CD4-positive, alpha-beta T cell (primary cell): ENCODE measurements at regions of chr3 and their contacts with region 1.

Region 1: GRCh38 chr3:131485119-131485518 is 17.7 kb downstream of the MRPL3 start:
- DNase-seq: no peak
- ATAC-seq: no peak
- H3K4me3 ChIP-seq: no peak overlapping the region
- H3K4me3 Mint-ChIP-seq: no peak overlapping the region
- H3K27ac ChIP-seq: no peak overlapping the region
- H3K27ac Mint-ChIP-seq: no peak overlapping the region
- H3K4me1 ChIP-seq: no peaks in the 10 kb centered on the region
- H3K4me1 Mint-ChIP-seq: peaks cover 39% of the 10 kb centered on the region
- H3K27me3 ChIP-seq: no peaks in the 10 kb centered on the region
- H3K27me3 Mint-ChIP-seq: no peaks in the 10 kb centered on the region
- CTCF ChIP-seq: no peak

Region 2: GRCh38 chr3:130490241-130490640 is 994.9 kb before region 1 on chr3:
- CTCF ChIA-PET with region 1: no interaction called
- POLR2A ChIA-PET with region 1: no interaction called
- intact Hi-C with region 1: no loop called
- DNase-seq: no peak
- ATAC-seq: no peak
- H3K4me3 ChIP-seq: no peak overlapping the region
- H3K4me3 Mint-ChIP-seq: no peak overlapping the region
- H3K27ac ChIP-seq: no peak overlapping the region
- H3K27ac Mint-ChIP-seq: no peak overlapping the region
- H3K4me1 ChIP-seq: no peaks in the 10 kb centered on the region
- H3K4me1 Mint-ChIP-seq: no peaks in the 10 kb centered on the region
- H3K27me3 ChIP-seq: no peaks in the 10 kb centered on the region
- H3K27me3 Mint-ChIP-seq: peaks cover 15% of the 10 kb centered on the region
- CTCF ChIP-seq: no peak

Region 3: DNA sequence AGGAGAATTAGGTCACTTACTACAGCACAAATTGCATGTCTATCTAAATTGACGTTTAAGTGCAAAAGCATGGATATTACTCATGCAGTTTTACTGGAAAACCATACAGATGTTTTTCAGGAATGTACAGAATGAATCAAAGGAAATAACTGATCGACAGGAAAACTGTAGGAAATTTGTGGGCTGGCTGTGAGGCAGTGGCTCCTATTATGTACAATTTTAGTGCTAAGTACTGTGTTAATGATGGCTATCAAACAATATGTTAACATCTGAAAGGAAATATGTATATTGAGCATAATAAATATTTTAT is 96.7 kb before region 1 on chr3:
- CTCF ChIA-PET with region 1: no interaction called
- POLR2A ChIA-PET with region 1: no interaction called
- intact Hi-C with region 1: loop called in 1 of 2 experiments (anchors 1 kb)
- DNase-seq: no peak
- ATAC-seq: no peak
- H3K4me3 ChIP-seq: no peak overlapping the region
- H3K4me3 Mint-ChIP-seq: no peak overlapping the region
- H3K27ac ChIP-seq: no peak overlapping the region
- H3K27ac Mint-ChIP-seq: no peak overlapping the region
- H3K4me1 ChIP-seq: peaks cover 19% of the 10 kb centered on the region
- H3K4me1 Mint-ChIP-seq: peaks cover 27% of the 10 kb centered on the region
- H3K27me3 ChIP-seq: no peaks in the 10 kb centered on the region
- H3K27me3 Mint-ChIP-seq: no peaks in the 10 kb centered on the region
- CTCF ChIP-seq: no peak

Region 4: DNA sequence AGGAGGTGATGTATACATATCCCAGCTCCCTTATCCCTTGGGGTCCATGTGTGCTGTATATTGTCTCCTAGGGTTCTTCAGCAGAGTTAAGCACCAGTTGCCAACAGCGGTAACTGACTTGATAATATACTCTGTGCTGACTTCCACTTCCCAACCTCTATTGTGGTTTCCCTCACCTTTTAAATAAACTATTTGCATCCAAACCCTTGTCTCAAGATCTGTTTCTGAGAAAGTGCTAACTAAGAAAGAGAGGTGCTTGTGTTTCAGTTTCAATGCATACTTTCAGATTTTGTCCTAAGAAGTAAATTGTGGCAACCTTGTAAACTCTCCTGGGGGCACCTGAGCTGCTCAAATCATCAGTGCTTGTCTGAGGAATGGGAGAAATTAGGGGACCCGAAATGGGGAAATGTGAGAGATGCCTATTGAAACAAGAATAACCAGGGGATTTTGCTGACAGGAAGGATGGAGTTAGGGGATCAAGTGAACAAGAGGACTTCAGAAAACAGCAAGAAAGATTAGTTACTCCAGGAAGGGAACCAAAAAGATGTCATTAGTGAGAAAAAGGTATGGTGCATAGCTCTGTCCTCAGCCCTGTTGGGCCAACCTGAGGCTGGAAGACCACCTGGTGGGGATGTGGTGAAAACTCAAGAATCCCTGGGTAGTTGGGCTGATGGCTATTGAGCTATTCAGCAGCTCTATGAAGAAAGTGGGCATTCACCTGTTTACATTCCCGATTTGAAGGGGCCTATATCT is 68.6 kb after region 1 on chr3:
- CTCF ChIA-PET with region 1: no interaction called
- POLR2A ChIA-PET with region 1: no interaction called
- intact Hi-C with region 1: no loop called
- DNase-seq: no peak
- ATAC-seq: no peak
- H3K4me3 ChIP-seq: no peak overlapping the region
- H3K4me3 Mint-ChIP-seq: no peak overlapping the region
- H3K27ac ChIP-seq: no peak overlapping the region
- H3K27ac Mint-ChIP-seq: no peak overlapping the region
- H3K4me1 ChIP-seq: no peaks in the 10 kb centered on the region
- H3K4me1 Mint-ChIP-seq: no peaks in the 10 kb centered on the region
- H3K27me3 ChIP-seq: peaks cover 3 to 4% of the 10 kb centered on the region in 2 experiments
- H3K27me3 Mint-ChIP-seq: peaks cover 7% of the 10 kb centered on the region
- CTCF ChIP-seq: no peak

Region 5: GRCh38 chr3:131794766-131795388 is 309.8 kb after region 1 on chr3:
- CTCF ChIA-PET with region 1: no interaction called
- POLR2A ChIA-PET with region 1: no interaction called
- intact Hi-C with region 1: no loop called
- DNase-seq: peak in 5 of 14 experiments; percentile 2 to 57 (median 33)
- ATAC-seq: peak; percentile 54
- H3K4me3 ChIP-seq: no peak overlapping the region
- H3K4me3 Mint-ChIP-seq: no peak overlapping the region
- H3K27ac ChIP-seq: no peak overlapping the region
- H3K27ac Mint-ChIP-seq: no peak overlapping the region
- H3K4me1 ChIP-seq: no peaks in the 10 kb centered on the region
- H3K4me1 Mint-ChIP-seq: peaks cover 14% of the 10 kb centered on the region
- H3K27me3 ChIP-seq: no peaks in the 10 kb centered on the region
- H3K27me3 Mint-ChIP-seq: peaks cover 17% of the 10 kb centered on the region
- CTCF ChIP-seq: peak; percentile 68